ENCODE measurements at regions of chr11 and their contacts with region 1.

Region 1: DNA sequence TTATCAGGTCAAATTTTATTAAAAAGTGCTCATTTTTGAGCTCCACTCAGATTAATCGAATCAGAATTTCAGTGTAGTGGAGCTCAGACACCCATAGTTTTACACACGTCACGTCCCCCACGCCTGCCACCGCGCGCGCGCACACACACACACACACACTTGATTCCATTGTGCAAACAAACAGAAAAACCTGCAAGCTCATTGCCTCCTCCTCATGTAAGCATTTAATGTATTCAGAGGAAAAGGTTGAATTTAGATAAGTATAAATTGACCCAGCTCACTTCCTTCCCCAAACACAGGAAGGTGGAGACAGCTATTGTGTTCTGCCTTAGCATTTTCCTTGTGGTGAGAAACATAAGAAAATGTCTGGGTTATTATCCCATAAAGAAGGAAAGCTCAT is 336.7 kb downstream of the LUZP2 start:
- DNase-seq: no peak
- ATAC-seq: no peak
- H3K4me3 Mint-ChIP-seq: no peak overlapping the region
- H3K27ac Mint-ChIP-seq: no peak overlapping the region
- H3K4me1 Mint-ChIP-seq: no peaks in the 10 kb centered on the region
- H3K27me3 Mint-ChIP-seq: no peaks in the 10 kb centered on the region

Region 2: DNA sequence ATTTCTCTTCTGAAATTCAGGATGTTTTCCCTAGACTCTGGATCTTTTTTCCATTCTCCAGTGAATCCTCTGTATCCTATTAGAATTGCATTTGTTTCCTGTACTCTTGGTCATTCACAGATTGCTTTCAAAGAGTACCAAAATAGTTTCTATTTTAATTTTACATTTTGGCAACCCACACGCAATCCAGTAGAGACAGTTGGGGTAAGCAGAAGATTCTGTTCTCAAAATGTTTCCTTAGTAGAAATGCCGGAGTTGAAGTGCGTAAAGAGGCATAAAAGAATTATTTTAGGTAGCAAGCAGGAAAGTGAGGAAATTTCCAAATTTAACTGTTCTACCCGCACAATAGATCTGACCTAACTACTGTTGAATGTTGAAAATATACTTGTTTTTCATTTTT is 505.7 kb after region 1 on chr11:
- CTCF ChIA-PET with region 1: no interaction called
- POLR2A ChIA-PET with region 1: interaction called, 10 read pairs
- intact Hi-C with region 1: no loop called
- DNase-seq: no peak
- ATAC-seq: no peak
- H3K4me3 Mint-ChIP-seq: no peak overlapping the region
- H3K27ac Mint-ChIP-seq: no peak overlapping the region
- H3K4me1 Mint-ChIP-seq: no peaks in the 10 kb centered on the region
- H3K27me3 Mint-ChIP-seq: no peaks in the 10 kb centered on the region